ENCODE measurements at regions of chr11 and their contacts with region 1.

Region 1: GRCh38 chr11:126354631-126355323 is 709 bp upstream of the ST3GAL4 start:
- DNase-seq: no peak
- H3K4me3 ChIP-seq: peak overlapping the region; percentile 84 to 89 (median 88)
- H3K27ac ChIP-seq: peak overlapping the region; percentile 76
- H3K4me1 ChIP-seq: peaks cover 43% of the 10 kb centered on the region
- H3K27me3 ChIP-seq: no peaks in the 10 kb centered on the region
- CTCF ChIP-seq: no peak

Region 2: GRCh38 chr11:126194121-126194543 is 160.6 kb before region 1 on chr11:
- CTCF ChIA-PET with region 1: no interaction called
- dilution Hi-C with region 1: no loop called
- in situ Hi-C with region 1: no loop called
- intact Hi-C with region 1: no loop called
- DNase-seq: peak; percentile 16
- H3K4me3 ChIP-seq: no peak overlapping the region
- H3K27ac ChIP-seq: no peak overlapping the region
- H3K4me1 ChIP-seq: no peaks in the 10 kb centered on the region
- H3K27me3 ChIP-seq: no peaks in the 10 kb centered on the region
- CTCF ChIP-seq: peak; percentile 67 to 70

Region 3: DNA sequence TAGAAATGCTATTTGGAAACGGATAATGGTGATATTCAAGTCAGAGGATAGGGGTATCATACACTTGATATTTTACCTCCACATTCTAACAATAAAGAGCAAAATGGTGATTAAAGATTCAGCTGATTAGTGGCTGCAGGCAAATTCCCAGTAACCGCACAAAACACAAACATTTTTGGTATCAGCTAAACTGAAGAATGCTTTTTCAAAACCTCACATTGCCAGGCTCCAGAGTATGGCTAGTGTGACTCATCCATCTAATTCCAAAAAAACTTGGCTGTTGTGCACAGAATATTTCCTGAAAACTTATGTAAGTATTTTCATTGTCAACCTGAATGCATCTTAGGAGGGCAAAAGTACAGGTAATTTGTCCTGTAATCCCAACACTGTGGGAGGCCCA is 97.0 kb before region 1 on chr11:
- CTCF ChIA-PET with region 1: no interaction called
- dilution Hi-C with region 1: no loop called
- in situ Hi-C with region 1: no loop called
- intact Hi-C with region 1: no loop called
- DNase-seq: peak; percentile 26
- H3K4me3 ChIP-seq: no peak overlapping the region
- H3K27ac ChIP-seq: no peak overlapping the region
- H3K4me1 ChIP-seq: no peaks in the 10 kb centered on the region
- H3K27me3 ChIP-seq: no peaks in the 10 kb centered on the region
- CTCF ChIP-seq: no peak

Region 4: DNA sequence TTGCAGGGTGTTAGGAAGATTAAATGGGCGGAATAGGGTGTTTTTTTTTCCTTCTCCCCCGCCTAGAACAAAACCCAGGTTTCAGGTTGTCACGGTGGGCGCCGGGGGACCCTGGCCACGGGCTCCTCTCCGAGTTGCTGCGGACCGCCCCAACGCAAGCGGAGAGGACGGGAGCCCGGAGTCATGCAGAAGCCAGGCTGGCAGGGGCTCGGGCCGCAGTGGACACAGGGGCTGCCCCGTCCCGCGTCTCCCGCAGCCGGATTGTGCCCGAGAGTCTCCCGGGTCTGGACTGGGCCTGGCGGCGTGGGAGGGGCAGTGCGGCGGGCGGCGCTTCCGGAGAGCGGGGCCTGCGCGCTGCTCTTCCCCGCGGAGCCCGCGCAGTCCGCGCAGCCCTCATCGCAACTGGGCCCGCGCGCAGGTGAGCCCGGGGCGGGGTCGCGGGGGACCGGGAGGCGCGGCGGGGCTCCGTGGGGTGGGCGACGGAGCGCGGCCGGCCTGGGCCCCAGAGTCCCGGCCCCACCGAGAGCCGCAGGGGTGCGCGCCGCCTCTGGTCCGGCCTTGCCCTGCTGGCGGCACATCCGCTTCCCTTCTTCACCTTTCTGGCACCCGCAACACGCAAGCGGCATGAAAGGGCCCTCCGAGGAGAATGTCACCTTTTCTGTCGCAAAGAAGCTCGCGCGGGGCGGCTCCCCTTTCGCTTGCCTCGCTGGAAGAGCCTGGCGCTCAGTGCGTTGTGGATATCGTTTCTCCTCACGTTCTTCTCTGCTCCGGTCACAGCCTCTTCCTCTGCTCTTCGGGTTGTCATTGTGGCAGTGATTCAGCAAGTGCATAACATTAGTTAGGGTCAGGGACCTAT is 71.8 kb before region 1 on chr11 and contains the start of gene TIRAP:
- CTCF ChIA-PET with region 1: no interaction called
- dilution Hi-C with region 1: loop called (anchors 5 kb)
- in situ Hi-C with region 1: no loop called
- intact Hi-C with region 1: no loop called
- DNase-seq: peak; percentile 53
- H3K4me3 ChIP-seq: peak within 1 kb of the TSS; percentile 60 to 81 (median 69)
- H3K27ac ChIP-seq: peak within 1 kb of the TSS; percentile 18
- H3K4me1 ChIP-seq: peaks cover 23% of the 10 kb centered on the region
- H3K27me3 ChIP-seq: no peaks in the 10 kb centered on the region
- CTCF ChIP-seq: no peak
- total RNA-seq, gene TIRAP: 6.3 to 8.8 TPM

Region 5: DNA sequence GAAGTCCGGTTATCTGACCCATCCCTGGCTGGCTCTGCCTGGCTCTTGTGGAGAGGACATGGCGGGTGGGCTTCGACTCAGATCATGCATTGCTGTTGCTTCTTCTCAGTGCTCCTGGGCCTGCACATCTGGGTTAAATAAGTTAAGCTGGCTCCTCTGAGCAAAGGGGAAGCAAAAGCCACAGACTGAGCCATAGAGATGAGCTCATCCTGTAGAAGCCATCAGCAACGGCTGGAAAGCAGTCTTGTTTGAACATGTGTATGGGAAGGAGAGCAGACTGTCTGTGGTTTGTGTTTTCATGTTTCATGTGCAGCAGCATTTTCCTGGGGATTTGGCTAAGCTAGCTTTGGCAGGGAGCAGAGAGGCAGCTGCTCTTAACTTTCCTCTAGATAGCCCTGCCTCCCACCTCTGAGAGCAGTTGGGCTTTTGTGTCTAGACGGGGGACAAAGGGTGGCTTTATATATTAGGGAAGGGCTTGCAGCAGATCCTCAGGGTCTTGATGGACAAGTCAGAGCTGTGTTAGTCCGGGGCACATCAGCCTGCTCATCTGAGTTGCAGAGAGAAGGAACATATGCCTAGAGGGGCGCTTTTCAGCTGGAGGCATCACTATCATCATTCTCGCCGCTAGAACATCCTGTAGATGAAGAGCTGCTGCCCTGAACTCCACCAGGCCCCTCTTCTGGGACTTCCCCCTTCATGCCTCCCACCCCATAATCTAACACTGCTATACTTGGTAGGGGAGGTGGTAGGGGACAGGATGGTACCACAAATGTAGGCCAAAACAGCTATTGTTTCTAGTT is 36.0 kb before region 1 on chr11:
- CTCF ChIA-PET with region 1: no interaction called
- dilution Hi-C with region 1: no loop called
- in situ Hi-C with region 1: no loop called
- intact Hi-C with region 1: loop called (anchors 1 kb)
- DNase-seq: peak; percentile 96
- H3K4me3 ChIP-seq: peak overlapping the region; percentile 2 to 43 (median 26)
- H3K27ac ChIP-seq: peak overlapping the region; percentile 80
- H3K4me1 ChIP-seq: peaks cover 32% of the 10 kb centered on the region
- H3K27me3 ChIP-seq: no peaks in the 10 kb centered on the region
- CTCF ChIP-seq: no peak

Region 6: GRCh38 chr11:126375726-126376125 is 20.9 kb after region 1 on chr11:
- CTCF ChIA-PET with region 1: no interaction called
- dilution Hi-C with region 1: no loop called
- in situ Hi-C with region 1: no loop called
- intact Hi-C with region 1: loop called (anchors 1 kb)
- DNase-seq: no peak
- H3K4me3 ChIP-seq: no peak overlapping the region
- H3K27ac ChIP-seq: no peak overlapping the region
- H3K4me1 ChIP-seq: peaks cover 20% of the 10 kb centered on the region
- H3K27me3 ChIP-seq: no peaks in the 10 kb centered on the region
- CTCF ChIP-seq: no peak

Region 7: DNA sequence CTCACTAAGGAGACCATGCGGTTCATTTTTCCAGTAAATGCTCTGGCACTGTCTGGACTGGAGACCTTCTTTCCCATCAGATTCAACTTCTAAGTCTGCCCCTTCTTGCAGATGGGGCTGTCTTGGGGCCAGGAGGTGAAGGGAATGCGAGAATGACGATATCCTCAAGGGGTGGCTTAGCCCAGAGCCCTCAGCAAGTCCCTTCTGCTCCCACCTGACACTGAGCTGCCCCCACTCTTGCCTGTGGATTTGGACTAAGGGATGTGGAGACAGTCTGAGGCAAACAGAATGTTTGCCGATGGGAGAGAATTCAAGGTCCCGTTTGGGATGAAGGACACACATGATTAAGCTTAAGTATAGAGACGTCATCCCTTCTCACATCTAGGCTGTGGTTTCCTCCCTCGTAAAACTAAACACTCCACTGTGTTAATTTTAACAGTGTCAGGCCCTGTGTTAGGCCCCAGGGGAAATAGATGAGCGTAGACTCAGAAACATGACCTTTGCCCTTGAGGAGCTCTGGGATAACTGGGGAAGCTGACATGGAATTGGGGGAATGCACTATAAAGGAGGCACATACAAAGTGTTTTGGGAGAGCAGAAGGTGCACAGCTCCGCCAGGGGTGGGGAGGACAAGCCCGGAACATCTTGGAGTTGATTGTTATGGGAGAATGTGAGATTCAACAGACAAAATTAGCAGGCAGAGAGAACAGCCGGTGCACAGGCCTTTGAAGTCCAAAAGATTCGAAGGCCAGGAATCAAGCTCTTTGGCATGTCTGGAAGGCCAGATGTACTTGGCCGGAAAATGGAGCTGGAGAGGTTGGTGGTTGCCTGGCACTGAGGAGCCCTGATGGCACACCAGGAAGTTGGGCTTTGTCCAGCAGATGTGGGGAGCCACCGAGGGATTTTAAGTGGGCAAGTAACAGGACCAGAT is 72.3 kb after region 1 on chr11:
- CTCF ChIA-PET with region 1: no interaction called
- dilution Hi-C with region 1: loop called (anchors 5 kb)
- in situ Hi-C with region 1: no loop called
- intact Hi-C with region 1: no loop called
- DNase-seq: no peak
- H3K4me3 ChIP-seq: no peak overlapping the region
- H3K27ac ChIP-seq: no peak overlapping the region
- H3K4me1 ChIP-seq: peaks cover 10% of the 10 kb centered on the region
- H3K27me3 ChIP-seq: no peaks in the 10 kb centered on the region
- CTCF ChIP-seq: no peak

Measured in mammary epithelial cell (primary cell).